Calu3 (cell line): ENCODE measurements at regions of chr1 and their contacts with region 1.

Region 1: GRCh38 chr1:183685112-183685713 is 32.1 kb upstream of the APOBEC4 start:
- DNase-seq: peak; percentile 47
- H3K4me3 Mint-ChIP-seq: no peak overlapping the region
- H3K27ac Mint-ChIP-seq: no peak overlapping the region
- H3K4me1 Mint-ChIP-seq: peaks cover 10% of the 10 kb centered on the region
- H3K27me3 Mint-ChIP-seq: no peaks in the 10 kb centered on the region
- CTCF ChIP-seq: peak; percentile 66

Region 2: DNA sequence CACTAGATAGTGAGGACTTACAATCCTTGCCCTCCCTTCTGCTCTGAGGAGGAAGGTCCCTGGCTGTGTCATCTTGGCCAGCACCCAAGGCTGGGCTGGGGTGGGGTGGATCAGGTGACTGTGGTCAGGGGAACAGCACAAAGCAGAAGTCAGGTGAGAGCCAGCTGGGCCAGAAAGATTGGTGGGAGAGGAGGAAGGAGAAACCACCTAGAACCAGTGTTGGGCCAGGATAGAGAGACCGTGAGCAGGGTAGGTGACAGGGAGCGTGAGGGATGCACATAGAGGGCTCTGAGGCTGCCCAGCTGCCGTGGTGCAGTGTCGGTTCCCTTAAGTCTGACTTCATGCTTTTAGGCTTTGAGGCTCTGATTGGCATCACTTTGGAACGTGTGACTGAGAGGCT is 117.6 kb before region 1 on chr1:
- CTCF ChIA-PET with region 1: no interaction called
- intact Hi-C with region 1: no loop called
- DNase-seq: peak; percentile 89
- H3K4me3 Mint-ChIP-seq: peak overlapping the region; percentile 11
- H3K27ac Mint-ChIP-seq: peak overlapping the region; percentile 36
- H3K4me1 Mint-ChIP-seq: peaks cover 26% of the 10 kb centered on the region
- H3K27me3 Mint-ChIP-seq: no peaks in the 10 kb centered on the region
- CTCF ChIP-seq: no peak

Region 3: DNA sequence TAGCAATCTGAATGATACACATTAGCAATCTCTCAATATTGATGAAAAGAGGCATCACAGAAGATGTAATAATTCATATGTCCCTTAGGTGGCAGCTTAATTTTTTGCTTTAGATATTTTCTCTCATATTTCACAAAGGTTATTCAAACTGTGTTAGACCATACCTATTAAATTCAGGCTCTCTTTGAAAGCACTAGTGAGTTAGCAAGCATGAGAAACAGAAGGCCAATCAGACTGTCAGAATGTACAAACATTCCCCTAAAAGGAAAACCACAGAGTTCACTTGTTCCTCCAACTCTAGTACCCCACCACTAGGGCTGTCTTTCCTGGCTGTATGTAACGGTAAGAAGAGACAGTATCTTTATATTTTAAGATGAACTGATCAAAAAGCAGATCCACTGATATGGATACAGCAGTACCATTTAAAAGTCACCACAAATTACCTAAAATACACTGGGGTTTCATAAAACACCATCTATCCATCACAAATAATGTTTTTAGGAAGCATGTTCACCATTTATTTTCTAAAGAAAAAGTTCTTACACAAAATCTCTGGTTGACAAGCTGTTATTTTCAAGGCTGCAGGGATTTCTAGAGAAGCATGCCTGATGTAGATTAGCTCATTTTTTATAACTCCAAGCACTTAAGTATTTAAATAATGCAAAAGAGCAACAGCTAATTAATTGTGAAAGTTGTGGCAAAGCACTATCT is 51.4 kb before region 1 on chr1:
- CTCF ChIA-PET with region 1: interaction called, 7 read pairs
- intact Hi-C with region 1: loop called (anchors 2 kb)
- DNase-seq: peak; percentile 31
- H3K4me3 Mint-ChIP-seq: peak overlapping the region; percentile 95
- H3K27ac Mint-ChIP-seq: peak overlapping the region; percentile 50
- H3K4me1 Mint-ChIP-seq: peaks cover 31% of the 10 kb centered on the region
- H3K27me3 Mint-ChIP-seq: peaks cover 10% of the 10 kb centered on the region
- CTCF ChIP-seq: peak; percentile 54

Region 4: GRCh38 chr1:183699616-183700160 is 14.5 kb after region 1 on chr1:
- CTCF ChIA-PET with region 1: interaction called, 19 read pairs
- intact Hi-C with region 1: no loop called
- DNase-seq: peak; percentile 73
- H3K4me3 Mint-ChIP-seq: peak overlapping the region; percentile 29
- H3K27ac Mint-ChIP-seq: peak overlapping the region; percentile 97
- H3K4me1 Mint-ChIP-seq: peaks cover 54% of the 10 kb centered on the region
- H3K27me3 Mint-ChIP-seq: no peaks in the 10 kb centered on the region
- CTCF ChIP-seq: no peak

Region 5: DNA sequence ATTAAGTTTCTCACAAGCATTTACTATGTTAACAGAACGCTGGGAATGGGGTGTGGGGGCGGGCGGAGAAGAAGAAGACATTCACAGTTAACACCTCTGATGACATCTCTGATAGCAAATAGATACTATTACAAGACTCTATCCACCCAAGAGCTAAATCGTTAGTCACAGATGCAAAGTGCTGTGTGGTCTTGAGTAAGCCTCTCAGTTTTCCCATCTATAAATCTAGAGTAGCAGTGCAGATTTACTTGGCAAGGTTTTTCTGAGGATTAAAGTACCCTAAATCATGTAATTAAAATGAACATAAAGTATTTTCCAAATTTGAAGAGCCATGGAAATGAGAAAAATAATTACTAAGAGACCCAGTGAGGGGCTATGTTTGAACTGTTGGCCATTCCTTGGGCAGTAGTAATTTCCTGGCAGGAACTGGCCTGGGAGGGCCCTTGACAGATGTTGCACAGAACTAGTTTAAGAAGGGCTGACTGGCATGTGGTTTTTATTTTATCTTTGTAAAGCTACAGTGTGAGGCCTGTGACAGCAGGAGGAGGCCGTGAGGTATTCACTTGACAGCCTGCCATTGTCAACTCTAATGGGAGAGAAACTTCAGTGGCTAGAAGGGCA is 26.6 kb after region 1 on chr1:
- CTCF ChIA-PET with region 1: no interaction called
- intact Hi-C with region 1: no loop called
- DNase-seq: no peak
- H3K4me3 Mint-ChIP-seq: no peak overlapping the region
- H3K27ac Mint-ChIP-seq: no peak overlapping the region
- H3K4me1 Mint-ChIP-seq: peaks cover 12% of the 10 kb centered on the region
- H3K27me3 Mint-ChIP-seq: no peaks in the 10 kb centered on the region
- CTCF ChIP-seq: no peak

Region 6: GRCh38 chr1:183841950-183842794 is 157.0 kb after region 1 on chr1:
- CTCF ChIA-PET with region 1: no interaction called
- intact Hi-C with region 1: loop called (anchors 2 kb)
- DNase-seq: peak; percentile 44
- H3K4me3 Mint-ChIP-seq: peak overlapping the region; percentile 38
- H3K27ac Mint-ChIP-seq: peak overlapping the region; percentile 58
- H3K4me1 Mint-ChIP-seq: peaks cover 52% of the 10 kb centered on the region
- H3K27me3 Mint-ChIP-seq: no peaks in the 10 kb centered on the region
- CTCF ChIP-seq: no peak

Region 7: GRCh38 chr1:183915625-183916510 is 230.7 kb after region 1 on chr1:
- CTCF ChIA-PET with region 1: interaction called, 27 read pairs
- intact Hi-C with region 1: loop called (anchors 10 kb)
- DNase-seq: peak; percentile 87
- H3K4me3 Mint-ChIP-seq: no peak overlapping the region
- H3K27ac Mint-ChIP-seq: peak overlapping the region; percentile 3
- H3K4me1 Mint-ChIP-seq: peaks cover 24% of the 10 kb centered on the region
- H3K27me3 Mint-ChIP-seq: no peaks in the 10 kb centered on the region
- CTCF ChIP-seq: peak; percentile 81

Region 8: GRCh38 chr1:184801503-184801902 is 1116.3 kb after region 1 on chr1:
- CTCF ChIA-PET with region 1: no interaction called
- intact Hi-C with region 1: no loop called
- DNase-seq: no peak
- H3K4me3 Mint-ChIP-seq: no peak overlapping the region
- H3K27ac Mint-ChIP-seq: no peak overlapping the region
- H3K4me1 Mint-ChIP-seq: peaks cover 9% of the 10 kb centered on the region
- H3K27me3 Mint-ChIP-seq: no peaks in the 10 kb centered on the region
- CTCF ChIP-seq: no peak